Activated T-helper 2 cell treated with anti-CD3 and anti-CD28 coated beads, Interferon-gamma antibody, Interleukin-2, Interleukin-4, amounts not matched to agents 10 μg/mL and 5 μg/mL and 100 μg/mL, durations not matched to agents 14 hours and 24 hours and 36 hours (primary cell): ENCODE measurements at regions of chr4 and their contacts with region 1.

Region 1: DNA sequence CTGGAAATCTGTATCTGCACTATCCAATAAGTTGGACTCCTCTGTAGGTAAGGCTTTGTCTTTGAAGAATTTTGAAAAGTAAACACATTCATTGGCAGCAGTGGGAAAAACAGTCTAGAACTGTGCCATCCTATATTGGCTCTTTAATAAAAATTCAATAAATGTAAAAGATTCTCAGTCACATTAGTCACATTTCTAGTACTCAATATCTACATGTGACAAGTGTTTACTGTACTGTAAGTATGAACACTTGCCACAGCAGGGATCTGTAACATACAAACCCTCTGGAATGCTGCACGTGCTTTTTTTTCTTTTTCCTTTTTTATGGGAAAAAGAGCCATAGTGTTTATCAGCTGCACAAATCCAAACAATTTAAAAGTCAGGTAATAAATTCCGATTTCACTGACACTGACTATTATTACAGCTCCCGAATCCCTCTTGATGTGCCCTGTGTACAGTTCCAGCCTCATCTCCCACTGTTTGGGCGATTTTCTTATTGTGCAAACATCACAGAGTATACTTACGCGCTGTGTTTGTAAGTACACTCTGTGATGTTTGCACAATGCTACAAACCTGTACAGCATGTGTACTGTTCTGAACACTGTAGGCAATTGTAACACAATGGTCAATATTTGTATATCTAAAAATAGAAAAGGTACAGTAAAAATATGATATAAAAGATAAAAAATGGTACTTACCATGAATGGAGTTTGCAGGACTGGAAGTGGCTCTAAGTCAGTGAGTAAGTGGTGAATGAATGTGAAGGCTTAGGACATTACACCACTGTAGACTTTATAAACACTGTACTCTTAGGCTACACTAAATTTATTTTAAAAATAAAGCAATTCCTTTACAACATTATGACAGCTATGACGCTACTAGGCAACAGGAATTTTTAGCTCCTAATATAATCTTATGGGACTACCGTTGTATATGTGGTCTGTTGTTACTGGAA is 8.7 kb downstream of the PYURF start:
- DNase-seq: no peak
- H3K4me3 Mint-ChIP-seq: no peak overlapping the region
- H3K27ac Mint-ChIP-seq: no peak overlapping the region
- H3K4me1 Mint-ChIP-seq: no peaks in the 10 kb centered on the region
- H3K27me3 Mint-ChIP-seq: no peaks in the 10 kb centered on the region

Region 2: DNA sequence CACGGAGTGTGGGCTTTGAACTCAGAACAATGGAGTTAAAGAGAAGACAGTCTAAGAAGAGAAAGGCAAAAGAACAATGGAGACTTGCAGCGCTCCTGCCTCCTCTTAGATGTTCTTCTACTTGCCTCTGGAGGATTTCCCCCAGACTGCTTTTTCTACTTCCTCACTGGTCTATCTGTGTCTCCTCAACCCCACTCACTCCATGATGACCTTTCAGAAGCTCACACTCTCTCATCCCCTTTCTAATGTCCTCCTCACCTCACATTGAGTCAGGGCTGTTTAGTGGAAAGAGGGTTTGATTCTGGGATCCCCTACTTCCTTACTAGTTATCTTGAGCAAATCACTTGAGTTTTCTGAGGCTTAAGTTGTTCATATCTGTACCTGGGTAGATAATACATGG is 148.4 kb before region 1 on chr4:
- intact Hi-C with region 1: loop called (anchors 1 kb)
- DNase-seq: no peak
- H3K4me3 Mint-ChIP-seq: no peak overlapping the region
- H3K27ac Mint-ChIP-seq: no peak overlapping the region
- H3K4me1 Mint-ChIP-seq: peaks cover 7% of the 10 kb centered on the region
- H3K27me3 Mint-ChIP-seq: peaks cover 3% of the 10 kb centered on the region